Lower leg skin (tissue), 4 donors: ENCODE measurements at regions of chr16 and their contacts with region 1.

Region 1: GRCh38 chr16:6643080-6643686 is 689.5 kb upstream of the RBFOX1 start:
- DNase-seq: peak in 1 of 2 donors; percentile 49
- H3K4me3 ChIP-seq: no peak overlapping the region
- CTCF ChIP-seq: no peak
- POLR2A ChIP-seq: no peak

Region 2: DNA sequence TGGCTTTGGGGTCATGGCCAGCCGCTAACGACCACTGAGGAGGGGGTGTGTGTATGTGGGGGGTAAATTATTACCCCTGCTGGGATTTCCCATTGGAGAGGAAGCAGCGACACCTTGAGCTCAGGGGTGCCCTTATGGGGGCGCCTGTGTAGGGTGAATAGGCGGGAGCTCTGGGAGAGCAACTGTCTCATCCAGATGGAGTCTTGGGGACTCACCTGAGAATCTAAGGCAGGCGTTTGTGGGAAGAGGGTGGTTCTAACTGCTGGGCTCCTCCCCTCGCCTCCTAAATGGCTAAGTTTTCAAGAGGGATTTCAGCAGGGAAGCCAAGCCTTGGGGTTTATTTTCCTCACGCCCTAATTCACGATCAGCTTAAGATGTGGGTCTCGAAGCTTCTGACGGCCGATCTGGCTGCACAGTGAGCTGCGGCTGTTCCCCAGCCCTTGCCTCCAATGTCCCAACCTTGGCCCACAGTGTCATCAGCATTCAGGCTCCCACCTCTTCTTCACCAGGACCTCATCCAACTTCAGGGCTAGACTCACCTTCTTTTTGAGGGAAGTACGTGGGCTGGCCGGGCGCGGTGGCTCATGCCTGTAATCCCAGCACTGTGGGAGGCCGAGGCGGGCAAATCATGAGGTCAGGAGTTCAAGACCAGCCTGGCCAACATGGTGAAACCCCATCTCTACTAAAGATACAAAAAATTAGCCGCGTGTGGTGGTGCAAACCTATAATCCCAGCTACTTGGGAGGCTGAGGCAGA is 1408.7 kb before region 1 on chr16:
- intact Hi-C with region 1: loop called (anchors 2 kb)
- DNase-seq: no peak
- H3K4me3 ChIP-seq: no peak overlapping the region
- CTCF ChIP-seq: no peak
- POLR2A ChIP-seq: no peak

Region 3: GRCh38 chr16:7090628-7091115 is 447.5 kb after region 1 on chr16:
- intact Hi-C with region 1: no loop called
- DNase-seq: no peak
- H3K4me3 ChIP-seq: no peak overlapping the region
- CTCF ChIP-seq: no peak
- POLR2A ChIP-seq: no peak